Sigmoid colon (tissue), 7 donors: ENCODE measurements at regions of chr16 and their contacts with region 1.

Region 1: GRCh38 chr16:81996664-81997622 is 14.3 kb downstream of the SDR42E1 start:
- DNase-seq: no peak
- H3K4me3 ChIP-seq: no peak overlapping the region
- H3K27ac ChIP-seq: peak overlapping the region; percentile 39 to 81 (median 75)
- H3K4me1 ChIP-seq: peaks cover 0 to 34% (median 31%) of the 10 kb centered on the region in 4 donors
- H3K27me3 ChIP-seq: no peaks in the 10 kb centered on the region
- CTCF ChIP-seq: peak in 2 of 4 experiments; percentile 32 to 42
- EP300 ChIP-seq: no peak
- POLR2A ChIP-seq: no peak

Region 2: DNA sequence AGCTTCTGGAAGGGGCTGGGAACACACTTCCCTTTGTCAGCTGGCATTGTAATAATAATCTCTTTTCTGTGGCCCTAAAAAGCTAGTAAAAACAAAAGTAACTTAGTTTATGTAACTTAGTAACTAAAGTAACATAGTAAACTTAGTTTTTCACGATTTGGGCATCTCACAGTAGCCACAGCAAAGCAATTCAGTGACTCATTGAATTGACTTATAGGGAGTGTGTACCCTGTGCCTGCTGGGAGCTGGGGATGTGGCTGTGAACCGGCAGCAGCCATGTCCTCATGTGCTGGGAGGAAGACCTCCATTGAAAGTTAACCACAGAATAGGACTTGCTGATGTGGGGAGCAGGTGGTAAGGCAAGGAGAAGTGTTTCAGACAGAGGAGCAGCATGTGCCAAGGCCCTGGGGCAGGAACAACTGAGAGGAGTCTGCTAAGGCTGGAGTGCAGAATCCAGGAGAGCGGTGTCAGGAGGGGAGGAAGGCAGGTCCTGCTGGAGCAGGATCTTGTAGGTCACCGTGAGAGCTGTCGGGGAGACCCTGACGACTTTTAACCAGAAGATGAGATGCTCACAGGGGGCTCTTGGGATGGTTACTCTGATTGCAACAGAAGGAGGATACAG is 105.1 kb before region 1 on chr16:
- intact Hi-C with region 1: loop called (anchors 5 kb)
- DNase-seq: peak; percentile 27
- H3K4me3 ChIP-seq: no peak overlapping the region
- H3K27ac ChIP-seq: no peak overlapping the region
- H3K4me1 ChIP-seq: no peaks in the 10 kb centered on the region
- H3K27me3 ChIP-seq: no peaks in the 10 kb centered on the region
- CTCF ChIP-seq: no peak
- EP300 ChIP-seq: no peak
- POLR2A ChIP-seq: no peak